GM18951 (cell line): ENCODE measurements at regions of chr12 and their contacts with region 1.

Region 1: GRCh38 chr12:56987551-56988053 is 18.7 kb downstream of the ZBTB39 start:
- POLR2A ChIP-seq: no peak

Region 2: GRCh38 chr12:56521590-56522371 is 465.8 kb before region 1 on chr12 and contains the start of gene RBMS2:
- in situ Hi-C with region 1: loop called (anchors 25 kb)
- POLR2A ChIP-seq: no peak

Region 3: GRCh38 chr12:56622535-56622934 is 365.1 kb before region 1 on chr12:
- in situ Hi-C with region 1: no loop called
- POLR2A ChIP-seq: no peak

Region 4: GRCh38 chr12:56759263-56759908 is 228.2 kb before region 1 on chr12:
- in situ Hi-C with region 1: loop called (anchors 5 kb)
- POLR2A ChIP-seq: no peak

Region 5: GRCh38 chr12:57182921-57183790 is 195.6 kb after region 1 on chr12:
- in situ Hi-C with region 1: no loop called
- POLR2A ChIP-seq: no peak

Region 6: GRCh38 chr12:57309420-57309819 is 321.8 kb after region 1 on chr12:
- in situ Hi-C with region 1: no loop called
- POLR2A ChIP-seq: no peak